Activated naive CD4-positive, alpha-beta T cell treated with anti-CD3 and anti-CD28 coated beads for 36 hours (primary cell): ENCODE measurements at regions of chr1 and their contacts with region 1.

Region 1: DNA sequence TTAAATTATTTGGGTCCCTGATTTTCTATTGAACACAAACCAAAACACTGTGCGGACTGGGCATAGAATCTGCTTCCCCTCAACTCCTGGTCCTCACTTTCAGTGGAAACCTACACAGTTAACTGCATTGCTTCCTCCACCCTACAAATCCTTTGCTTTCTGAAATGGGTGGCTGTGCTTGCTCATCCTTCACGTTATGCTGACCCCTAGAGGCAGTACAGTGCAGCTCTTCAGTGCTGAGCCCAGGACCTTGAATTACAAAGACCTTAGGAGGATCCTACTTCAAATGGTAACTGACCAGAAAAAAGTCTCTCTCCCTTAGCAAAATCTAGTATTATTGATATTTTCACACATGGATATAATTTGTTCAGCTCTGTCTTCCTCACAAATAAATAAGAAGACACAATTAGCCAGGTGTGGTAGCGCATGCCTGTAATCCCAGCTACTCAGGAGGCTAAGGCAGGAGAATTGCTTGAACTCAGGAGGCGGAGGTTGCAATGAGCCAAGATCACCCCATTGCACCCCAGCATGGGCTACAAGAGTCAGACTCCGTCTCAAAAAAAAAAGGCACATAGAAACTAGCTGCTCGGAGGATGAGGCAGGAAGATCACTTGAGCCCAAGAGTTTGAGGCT is 63.4 kb upstream of the L1TD1 start:
- DNase-seq: peak; percentile 57
- H3K4me3 Mint-ChIP-seq: no peak overlapping the region
- H3K27ac Mint-ChIP-seq: no peak overlapping the region
- H3K4me1 Mint-ChIP-seq: no peaks in the 10 kb centered on the region
- H3K27me3 Mint-ChIP-seq: no peaks in the 10 kb centered on the region

Region 2: DNA sequence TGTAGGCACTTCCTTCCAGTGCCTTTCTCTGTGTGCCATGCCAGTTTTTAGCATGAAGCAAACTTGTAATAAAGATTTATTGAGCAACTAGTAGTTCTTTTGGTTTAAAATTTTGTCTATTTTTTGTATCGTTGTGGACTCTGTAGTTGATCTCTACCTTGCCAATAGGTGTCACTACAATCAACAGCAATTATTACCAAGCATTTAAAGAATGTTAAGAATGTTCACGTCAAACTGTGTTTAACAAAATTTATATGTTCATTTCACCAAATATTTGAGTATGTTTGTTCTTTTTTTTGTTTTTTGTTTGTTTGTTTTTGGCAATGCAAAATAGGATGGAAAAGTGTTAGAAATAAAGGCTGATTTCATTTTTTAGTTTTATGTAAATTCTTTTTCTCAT is 180.8 kb before region 1 on chr1:
- CTCF ChIA-PET with region 1: no interaction called
- intact Hi-C with region 1: loop called (anchors 10 kb)
- DNase-seq: no peak
- H3K4me3 Mint-ChIP-seq: no peak overlapping the region
- H3K27ac Mint-ChIP-seq: no peak overlapping the region
- H3K4me1 Mint-ChIP-seq: no peaks in the 10 kb centered on the region
- H3K27me3 Mint-ChIP-seq: no peaks in the 10 kb centered on the region

Region 3: DNA sequence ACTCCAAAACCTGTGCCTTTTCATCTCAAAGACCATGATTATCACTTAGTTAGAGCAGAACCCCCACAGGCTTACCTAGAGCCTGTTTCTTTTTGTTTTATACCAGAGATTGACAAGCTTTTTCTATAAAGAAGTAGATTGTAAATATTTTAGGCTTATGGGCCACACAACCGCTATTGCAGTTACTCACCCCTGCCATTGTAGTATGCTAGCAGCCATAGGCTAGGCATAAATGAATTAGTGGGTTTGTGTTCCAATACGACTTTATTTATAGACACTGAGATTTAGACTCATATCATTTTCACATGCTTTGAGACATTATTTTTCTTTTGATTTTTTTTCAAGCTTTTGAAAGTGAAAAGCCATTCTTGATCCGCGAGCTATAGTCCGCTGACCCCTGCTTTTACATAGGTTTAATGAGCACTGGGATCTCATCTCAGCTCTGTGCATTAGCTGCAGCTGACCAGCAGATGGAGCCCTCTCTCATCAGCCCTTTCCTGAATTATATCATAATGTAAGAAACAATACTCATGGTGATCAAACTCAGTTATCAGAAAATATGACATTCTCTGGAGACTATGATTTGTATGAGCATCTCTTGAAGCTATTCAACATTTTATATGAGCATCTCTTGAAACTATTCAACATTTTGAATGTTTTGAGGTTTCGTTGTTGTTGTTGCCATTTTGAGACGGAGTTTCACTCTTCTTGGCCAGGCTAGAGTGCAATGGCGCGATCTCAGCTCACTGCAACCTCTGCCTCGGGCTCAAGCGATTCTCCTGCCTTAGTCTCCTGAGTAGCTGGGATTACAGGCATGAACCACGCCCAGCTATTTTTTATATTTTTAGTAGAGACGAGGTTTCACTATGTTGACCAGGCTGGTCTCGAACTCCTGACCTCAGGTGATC is 48.5 kb before region 1 on chr1:
- CTCF ChIA-PET with region 1: interaction called, 20 read pairs
- intact Hi-C with region 1: loop called (anchors 1 kb)
- DNase-seq: peak; percentile 62
- H3K4me3 Mint-ChIP-seq: no peak overlapping the region
- H3K27ac Mint-ChIP-seq: no peak overlapping the region
- H3K4me1 Mint-ChIP-seq: no peaks in the 10 kb centered on the region
- H3K27me3 Mint-ChIP-seq: no peaks in the 10 kb centered on the region

Region 4: GRCh38 chr1:62144238-62144831 is 13.1 kb after region 1 on chr1:
- CTCF ChIA-PET with region 1: interaction called, 15 read pairs
- intact Hi-C with region 1: no loop called
- DNase-seq: peak; percentile 67
- H3K4me3 Mint-ChIP-seq: no peak overlapping the region
- H3K27ac Mint-ChIP-seq: no peak overlapping the region
- H3K4me1 Mint-ChIP-seq: no peaks in the 10 kb centered on the region
- H3K27me3 Mint-ChIP-seq: no peaks in the 10 kb centered on the region

Region 5: GRCh38 chr1:62154687-62155086 is 23.5 kb after region 1 on chr1:
- CTCF ChIA-PET with region 1: interaction called, 10 read pairs
- intact Hi-C with region 1: no loop called
- DNase-seq: no peak
- H3K4me3 Mint-ChIP-seq: no peak overlapping the region
- H3K27ac Mint-ChIP-seq: no peak overlapping the region
- H3K4me1 Mint-ChIP-seq: no peaks in the 10 kb centered on the region
- H3K27me3 Mint-ChIP-seq: no peaks in the 10 kb centered on the region